Activated CD8-positive, alpha-beta T cell treated with anti-CD3 and anti-CD28 coated beads for 36 hours (primary cell): ENCODE measurements at regions of chr9 and their contacts with region 1.

Region 1: GRCh38 chr9:37511016-37512010 is 25.6 kb downstream of the POLR1E start:
- DNase-seq: peak; percentile 33
- ATAC-seq: peak; percentile 45
- H3K4me3 Mint-ChIP-seq: no peak overlapping the region
- H3K27ac Mint-ChIP-seq: no peak overlapping the region
- H3K4me1 Mint-ChIP-seq: peaks cover 3% of the 10 kb centered on the region
- H3K27me3 Mint-ChIP-seq: no peaks in the 10 kb centered on the region
- CTCF ChIP-seq: no peak

Region 2: GRCh38 chr9:37449862-37450632 is 61.3 kb before region 1 on chr9:
- CTCF ChIA-PET with region 1: no interaction called
- POLR2A ChIA-PET with region 1: interaction called, 3 read pairs
- intact Hi-C with region 1: loop called (anchors 10 kb)
- DNase-seq: no peak
- ATAC-seq: no peak
- H3K4me3 Mint-ChIP-seq: no peak overlapping the region
- H3K27ac Mint-ChIP-seq: no peak overlapping the region
- H3K4me1 Mint-ChIP-seq: peaks cover 23% of the 10 kb centered on the region
- H3K27me3 Mint-ChIP-seq: no peaks in the 10 kb centered on the region
- CTCF ChIP-seq: no peak

Region 3: GRCh38 chr9:37465249-37466036 is 45.9 kb before region 1 on chr9 and contains the start of gene ZBTB5:
- CTCF ChIA-PET with region 1: no interaction called
- POLR2A ChIA-PET with region 1: no interaction called
- intact Hi-C with region 1: no loop called
- DNase-seq: peak; percentile 100
- ATAC-seq: peak; percentile 79
- H3K4me3 Mint-ChIP-seq: peak within 1 kb of the TSS; percentile 97
- H3K27ac Mint-ChIP-seq: peak within 1 kb of the TSS; percentile 98
- H3K4me1 Mint-ChIP-seq: peaks cover 31% of the 10 kb centered on the region
- H3K27me3 Mint-ChIP-seq: no peaks in the 10 kb centered on the region
- CTCF ChIP-seq: no peak
- total RNA-seq, gene ZBTB5: 8.6 to 8.8 TPM

Region 4: GRCh38 chr9:37496020-37496419 is 15.3 kb before region 1 on chr9:
- CTCF ChIA-PET with region 1: no interaction called
- POLR2A ChIA-PET with region 1: interaction called, 10 read pairs
- intact Hi-C with region 1: no loop called
- DNase-seq: no peak
- ATAC-seq: no peak
- H3K4me3 Mint-ChIP-seq: no peak overlapping the region
- H3K27ac Mint-ChIP-seq: peak overlapping the region; percentile 52
- H3K4me1 Mint-ChIP-seq: peaks cover 5% of the 10 kb centered on the region
- H3K27me3 Mint-ChIP-seq: no peaks in the 10 kb centered on the region
- CTCF ChIP-seq: no peak

Region 5: DNA sequence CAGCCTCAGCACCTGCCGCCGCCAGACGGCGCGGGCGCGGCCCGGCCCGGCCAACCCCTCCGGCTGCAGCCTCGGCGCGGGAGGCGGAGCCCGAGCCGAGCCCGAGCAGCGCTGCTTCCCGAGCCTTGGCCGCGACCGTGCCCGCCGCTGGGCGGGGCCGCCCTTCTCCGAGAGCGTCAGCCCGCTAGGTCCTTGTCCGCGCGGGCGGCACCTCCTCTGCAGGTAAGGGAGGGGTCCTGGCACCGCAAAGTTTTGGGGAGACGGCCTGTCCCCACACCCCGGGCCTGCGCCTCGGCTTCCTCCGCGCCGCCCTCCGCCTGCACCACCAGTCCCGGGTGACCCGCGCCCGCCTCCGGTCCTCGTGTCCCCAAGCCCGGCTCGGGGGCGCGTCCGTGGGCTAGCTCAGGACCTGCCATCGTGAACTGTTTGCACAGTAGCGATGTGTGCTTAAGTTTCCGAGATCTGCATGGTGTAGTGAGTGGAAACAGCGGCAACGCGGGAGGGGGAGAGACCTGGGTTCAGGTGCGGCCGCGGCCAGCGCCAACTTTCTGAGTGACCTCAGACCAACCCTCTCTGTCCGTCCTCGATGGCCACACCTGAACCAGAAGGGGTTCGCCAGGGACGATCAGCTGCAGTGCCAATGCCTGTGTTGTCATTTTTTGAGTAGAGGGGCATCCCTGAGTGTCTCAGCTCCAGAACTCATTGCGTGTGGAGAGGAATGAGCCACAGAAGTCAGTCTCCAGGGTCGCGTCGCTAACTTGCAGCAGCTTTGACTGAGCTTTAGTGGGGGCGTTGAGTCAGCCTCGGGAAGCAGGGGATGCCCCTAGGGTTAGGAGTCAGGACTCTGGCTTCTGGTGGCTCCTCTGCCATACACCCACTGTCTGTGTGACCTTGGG is 139.8 kb after region 1 on chr9 and contains the start of gene FRMPD1:
- CTCF ChIA-PET with region 1: no interaction called
- POLR2A ChIA-PET with region 1: no interaction called
- intact Hi-C with region 1: no loop called
- DNase-seq: peak; percentile 56
- ATAC-seq: peak; percentile 92
- H3K4me3 Mint-ChIP-seq: peak within 1 kb of the TSS; percentile 65
- H3K27ac Mint-ChIP-seq: no peak within 1 kb of the TSS
- H3K4me1 Mint-ChIP-seq: peaks cover 8% of the 10 kb centered on the region
- H3K27me3 Mint-ChIP-seq: peaks cover 56% of the 10 kb centered on the region
- CTCF ChIP-seq: no peak
- total RNA-seq, gene FRMPD1: not detected